ENCODE measurements at regions of chr2 and their contacts with region 1.

Region 1: DNA sequence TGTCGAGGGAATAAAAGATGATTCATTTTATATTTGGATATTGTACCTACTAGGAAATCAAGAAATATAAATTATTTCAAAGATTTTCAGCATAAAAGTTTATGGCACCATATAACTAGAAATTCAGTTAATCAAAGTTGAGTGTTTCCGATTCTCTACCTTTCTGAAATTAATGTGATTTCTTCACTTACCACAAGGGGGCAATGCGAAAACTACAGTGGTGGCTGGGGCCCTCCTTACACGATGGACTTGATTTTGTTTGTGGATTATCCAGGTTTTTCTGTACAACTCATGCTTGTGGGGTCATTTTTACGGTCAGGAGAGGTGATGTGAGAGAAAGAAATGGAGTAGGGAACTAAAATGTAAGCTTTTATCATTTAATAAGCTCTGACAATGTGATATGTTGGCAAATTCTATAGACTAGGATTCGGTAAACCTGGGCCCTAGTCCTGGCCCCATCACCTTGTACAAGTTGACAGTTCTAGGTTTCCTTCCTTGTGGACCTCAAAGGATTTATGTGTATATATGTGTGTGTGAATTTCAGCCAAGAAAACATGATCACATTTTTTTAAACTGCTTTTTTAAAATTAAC is 47.6 kb downstream of the G6PC2 start:
- DNase-seq: peak; percentile 31
- H3K4me3 ChIP-seq: no peak overlapping the region
- H3K27ac ChIP-seq: no peak overlapping the region
- H3K4me1 ChIP-seq: no peaks in the 10 kb centered on the region
- H3K27me3 ChIP-seq: no peaks in the 10 kb centered on the region
- CTCF ChIP-seq: peak; percentile 55 to 58
- POLR2A ChIP-seq: no peak

Region 2: GRCh38 chr2:169038338-169038757 is 89.6 kb after region 1 on chr2:
- CTCF ChIA-PET with region 1: no interaction called
- POLR2A ChIA-PET with region 1: no interaction called
- dilution Hi-C with region 1: no loop called
- intact Hi-C with region 1: no loop called
- DNase-seq: no peak
- H3K4me3 ChIP-seq: no peak overlapping the region
- H3K27ac ChIP-seq: no peak overlapping the region
- H3K4me1 ChIP-seq: no peaks in the 10 kb centered on the region
- H3K27me3 ChIP-seq: no peaks in the 10 kb centered on the region
- CTCF ChIP-seq: no peak
- POLR2A ChIP-seq: no peak

Region 3: GRCh38 chr2:169275696-169276444 is 327.2 kb after region 1 on chr2:
- CTCF ChIA-PET with region 1: no interaction called
- POLR2A ChIA-PET with region 1: no interaction called
- dilution Hi-C with region 1: no loop called
- intact Hi-C with region 1: loop called (anchors 10 kb)
- DNase-seq: peak; percentile 10
- H3K4me3 ChIP-seq: no peak overlapping the region
- H3K27ac ChIP-seq: no peak overlapping the region
- H3K4me1 ChIP-seq: no peaks in the 10 kb centered on the region
- H3K27me3 ChIP-seq: peaks cover 0 to 2% of the 10 kb centered on the region in 2 experiments
- CTCF ChIP-seq: peak; percentile 10 to 11
- POLR2A ChIP-seq: no peak

Region 4: DNA sequence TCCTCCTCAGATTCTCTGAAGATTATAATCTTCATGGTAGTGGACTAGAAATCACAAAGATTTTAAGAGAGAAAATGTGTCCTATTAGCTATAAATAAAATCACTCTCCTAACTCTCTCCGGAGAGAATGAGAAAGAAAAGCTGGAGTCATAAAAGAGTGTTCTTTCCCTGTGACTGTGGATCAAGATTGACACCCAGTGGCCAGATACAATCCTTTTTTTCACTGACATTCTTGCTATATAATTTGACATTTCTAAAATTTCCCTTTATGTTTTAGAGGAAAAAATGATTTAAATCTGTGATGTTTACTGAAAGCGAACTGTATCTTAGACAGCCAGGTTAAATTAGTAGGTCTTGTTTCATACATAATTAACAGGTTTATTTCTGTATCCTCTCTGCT is 449.0 kb after region 1 on chr2:
- CTCF ChIA-PET with region 1: no interaction called
- POLR2A ChIA-PET with region 1: no interaction called
- dilution Hi-C with region 1: no loop called
- intact Hi-C with region 1: loop called (anchors 10 kb)
- DNase-seq: no peak
- H3K4me3 ChIP-seq: no peak overlapping the region
- H3K27ac ChIP-seq: no peak overlapping the region
- H3K4me1 ChIP-seq: no peaks in the 10 kb centered on the region
- H3K27me3 ChIP-seq: peaks cover 7 to 12% of the 10 kb centered on the region in 2 experiments
- CTCF ChIP-seq: no peak
- POLR2A ChIP-seq: no peak

Measured in endothelial cell of umbilical vein (primary cell).